Right cardiac atrium (tissue), 5 donors: ENCODE measurements at regions of chr7 and their contacts with region 1.

Region 1: DNA sequence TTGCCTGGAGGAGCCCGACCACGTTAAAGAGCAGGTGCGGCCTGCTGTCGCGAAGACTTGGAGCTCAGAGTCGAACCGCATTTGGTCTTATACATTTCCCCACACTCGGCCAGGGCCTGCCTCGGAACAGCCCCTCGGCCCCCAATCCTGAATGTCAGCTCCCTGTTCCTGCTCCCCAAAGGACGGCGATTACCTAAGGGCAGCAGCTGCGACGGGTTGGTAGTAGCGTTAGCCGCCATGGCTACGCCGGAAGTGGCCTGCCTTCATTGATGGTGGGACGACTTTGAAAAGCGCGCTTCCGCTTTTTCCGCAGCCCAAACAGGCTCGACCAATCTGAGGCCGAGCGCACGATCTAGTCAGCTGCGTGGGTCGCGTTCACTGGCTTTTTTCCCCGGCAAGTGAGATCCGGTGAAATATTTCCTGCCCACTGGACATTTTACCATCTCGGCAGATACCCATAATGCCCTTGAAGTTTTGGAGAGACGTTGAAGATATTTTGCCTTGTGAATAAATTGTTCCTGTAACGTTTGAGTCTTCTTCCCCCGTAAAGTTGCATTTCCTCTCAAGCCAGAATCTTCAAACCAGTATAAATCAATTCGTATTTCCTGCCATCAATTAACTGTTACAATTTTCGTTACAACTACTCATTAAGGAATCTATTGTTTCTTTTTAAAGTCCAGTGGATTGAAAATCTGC is at the start of gene LSM5:
- DNase-seq: peak; percentile 94 to 96 (median 95)
- ATAC-seq: peak; percentile 92
- H3K4me3 ChIP-seq: peak within 1 kb of the TSS; percentile 64
- H3K27ac ChIP-seq: peak within 1 kb of the TSS; percentile 78
- H3K4me1 ChIP-seq: peaks cover 2% of the 10 kb centered on the region
- H3K27me3 ChIP-seq: no peaks in the 10 kb centered on the region
- total RNA-seq, gene LSM5: 33.5 to 47.8 (median 40.8) TPM

Region 2: GRCh38 chr7:32147546-32148268 is 342.6 kb before region 1 on chr7:
- intact Hi-C with region 1: no loop called
- DNase-seq: no peak
- ATAC-seq: no peak
- H3K4me3 ChIP-seq: no peak overlapping the region
- H3K27ac ChIP-seq: no peak overlapping the region
- H3K4me1 ChIP-seq: peaks cover 1% of the 10 kb centered on the region
- H3K27me3 ChIP-seq: no peaks in the 10 kb centered on the region

Region 3: DNA sequence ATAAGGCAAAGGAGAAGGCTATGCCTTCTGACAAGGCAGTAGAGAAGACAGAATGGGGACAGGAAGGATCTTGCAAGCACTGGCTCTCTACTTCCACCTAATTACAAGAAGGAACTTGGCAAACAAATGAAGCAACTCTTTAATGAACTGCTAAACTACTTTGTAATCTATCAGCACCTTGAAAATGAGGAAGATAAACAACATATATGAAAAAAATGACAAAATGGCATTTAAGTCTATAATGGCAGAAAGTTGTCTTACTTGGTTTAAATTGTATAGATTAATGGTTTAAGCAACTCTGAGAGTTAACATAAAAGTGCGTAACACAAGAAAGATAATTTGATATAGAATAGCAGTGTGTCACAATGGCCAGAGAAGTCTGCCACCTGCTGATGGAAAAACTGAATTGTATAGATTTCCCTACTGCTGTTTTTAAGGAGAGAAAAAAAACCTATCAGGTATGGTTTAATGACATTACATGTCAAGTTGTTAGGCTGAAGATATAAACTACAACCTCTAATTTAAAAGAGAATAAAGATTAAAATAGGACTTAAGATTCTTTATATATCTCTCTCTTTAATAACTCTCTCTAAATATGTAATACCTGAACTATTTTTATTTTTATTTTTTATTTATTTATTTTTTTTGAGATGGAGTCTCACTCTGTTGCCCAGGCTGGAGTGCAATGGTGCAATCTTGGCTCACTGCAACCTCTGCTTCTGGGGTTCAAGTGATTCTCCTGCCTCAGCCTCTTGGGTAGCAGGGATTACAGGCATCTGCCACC is 560.5 kb after region 1 on chr7:
- intact Hi-C with region 1: loop called in 1 of 4 experiments (anchors 5 kb)
- DNase-seq: no peak
- ATAC-seq: peak; percentile 38 to 47
- H3K4me3 ChIP-seq: no peak overlapping the region
- H3K27ac ChIP-seq: no peak overlapping the region
- H3K4me1 ChIP-seq: peaks cover 2% of the 10 kb centered on the region
- H3K27me3 ChIP-seq: no peaks in the 10 kb centered on the region